PC-9 (cell line): ENCODE measurements at regions of chr12 and their contacts with region 1.

Region 1: GRCh38 chr12:123717350-123717749 is 5.2 kb downstream of the ATP6V0A2 start:
- DNase-seq: no peak
- H3K4me3 ChIP-seq: no peak overlapping the region
- H3K27ac ChIP-seq: no peak overlapping the region
- H3K4me1 ChIP-seq: peaks cover 9% of the 10 kb centered on the region
- H3K27me3 ChIP-seq: no peaks in the 10 kb centered on the region
- CTCF ChIP-seq: no peak

Region 2: DNA sequence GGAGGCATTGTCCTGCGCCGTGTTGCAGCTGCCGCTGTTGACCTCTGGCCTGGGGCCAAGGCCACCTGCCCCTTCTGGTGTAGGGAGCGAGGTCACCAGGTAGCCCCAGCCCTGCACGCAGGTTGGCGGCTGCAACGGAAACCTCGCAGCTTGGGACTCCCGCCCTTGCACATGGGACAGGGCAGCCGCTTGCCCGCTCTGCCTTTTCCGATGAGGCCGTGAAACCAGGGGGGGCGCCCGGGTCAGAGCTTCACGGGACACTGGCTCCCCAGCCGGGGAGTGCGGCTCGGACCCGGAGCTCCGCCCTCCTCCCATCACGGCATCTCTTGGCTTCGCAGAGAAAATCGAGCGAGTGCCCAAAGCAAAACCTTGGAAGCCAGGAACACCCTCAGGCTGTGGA is 70.1 kb after region 1 on chr12:
- CTCF ChIA-PET with region 1: no interaction called
- POLR2A ChIA-PET with region 1: interaction called, 27 read pairs
- intact Hi-C with region 1: no loop called
- DNase-seq: no peak
- H3K4me3 ChIP-seq: no peak overlapping the region
- H3K27ac ChIP-seq: no peak overlapping the region
- H3K4me1 ChIP-seq: no peaks in the 10 kb centered on the region
- H3K27me3 ChIP-seq: peaks cover 48% of the 10 kb centered on the region
- CTCF ChIP-seq: no peak

Region 3: DNA sequence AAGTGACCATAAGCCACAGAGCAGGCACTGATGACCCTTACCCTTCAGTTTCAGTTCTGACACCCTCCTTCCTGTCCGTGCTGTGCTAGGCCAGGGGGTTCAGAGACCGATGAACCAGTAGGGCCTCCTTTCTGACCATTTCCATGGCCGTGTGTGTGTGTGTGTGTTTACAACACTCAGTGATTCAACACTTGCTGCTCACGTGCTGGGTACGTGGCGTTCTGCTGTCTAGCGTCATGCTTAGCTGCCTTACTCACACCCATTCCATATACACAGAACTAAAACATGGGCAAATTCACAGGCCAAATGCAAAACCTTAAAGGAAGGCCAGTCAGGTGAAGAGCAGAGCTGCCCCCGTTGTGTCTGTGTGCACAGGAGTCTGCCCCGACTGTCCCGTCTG is 112.2 kb after region 1 on chr12:
- CTCF ChIA-PET with region 1: no interaction called
- POLR2A ChIA-PET with region 1: no interaction called
- intact Hi-C with region 1: no loop called
- DNase-seq: no peak
- H3K4me3 ChIP-seq: no peak overlapping the region
- H3K27ac ChIP-seq: no peak overlapping the region
- H3K4me1 ChIP-seq: no peaks in the 10 kb centered on the region
- H3K27me3 ChIP-seq: peaks cover 63% of the 10 kb centered on the region
- CTCF ChIP-seq: no peak